AG04450 (cell line): ENCODE measurements at regions of chr16 and their contacts with region 1.

Region 1: GRCh38 chr16:88785106-88785924 is at the start of gene PIEZO1:
- DNase-seq: no peak
- H3K4me3 ChIP-seq: peak within 1 kb of the TSS; percentile 75
- H3K27ac ChIP-seq: peak within 1 kb of the TSS; percentile 77
- H3K27me3 ChIP-seq: no peaks in the 10 kb centered on the region
- CTCF ChIP-seq: peak; percentile 82
- polyA plus RNA-seq, gene PIEZO1: 47.0 and 72.7 TPM in 2 replicates

Region 2: GRCh38 chr16:88479793-88480760 is 305.2 kb before region 1 on chr16:
- CTCF ChIA-PET with region 1: no interaction called
- POLR2A ChIA-PET with region 1: no interaction called
- DNase-seq: no peak
- H3K4me3 ChIP-seq: no peak overlapping the region
- H3K27ac ChIP-seq: no peak overlapping the region
- H3K27me3 ChIP-seq: no peaks in the 10 kb centered on the region
- CTCF ChIP-seq: no peak

Region 3: DNA sequence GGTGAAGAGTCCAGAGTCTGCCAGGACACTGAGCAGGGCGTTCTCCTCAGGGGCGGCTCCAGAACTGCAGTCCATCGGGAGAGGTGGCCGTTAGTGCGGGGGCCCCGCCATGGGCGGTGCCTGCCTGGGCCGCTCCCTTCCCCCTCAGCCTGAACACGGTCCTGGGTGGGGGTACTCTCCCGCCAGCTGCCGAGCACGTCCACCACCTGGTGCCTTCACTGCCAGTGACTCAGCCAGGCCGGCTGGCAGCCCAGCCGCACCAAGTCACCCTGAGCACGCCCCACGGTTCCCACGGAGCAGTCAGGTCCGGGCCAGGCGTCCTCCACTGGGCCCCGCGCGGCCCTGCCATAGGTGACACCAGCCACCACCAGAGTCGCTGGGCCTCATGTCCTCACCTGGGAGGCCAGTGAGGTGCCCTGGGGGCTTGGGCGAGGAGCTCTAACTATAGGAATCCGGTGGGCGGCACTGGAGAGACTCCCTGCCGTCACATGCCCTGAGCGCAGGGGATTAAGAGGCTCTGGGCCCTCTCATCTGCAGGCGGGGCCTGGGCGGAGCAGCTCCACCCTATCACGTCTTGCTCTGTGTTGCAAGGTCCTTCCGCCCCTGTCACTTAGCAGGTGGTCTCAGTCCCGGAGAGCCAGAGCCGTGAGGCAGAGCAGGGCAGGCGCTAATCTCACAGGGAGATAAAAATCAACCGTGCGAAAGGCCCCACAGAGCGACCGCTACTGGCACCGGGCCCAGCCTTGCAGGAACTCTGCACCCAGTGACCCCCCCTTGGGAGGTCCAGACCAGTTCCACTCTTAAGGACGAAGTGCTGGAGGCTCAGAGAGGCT is 14.6 kb before region 1 on chr16:
- CTCF ChIA-PET with region 1: interaction called, 5 read pairs
- POLR2A ChIA-PET with region 1: interaction called, 35 read pairs
- DNase-seq: peak; percentile 63
- H3K4me3 ChIP-seq: peak overlapping the region; percentile 25
- H3K27ac ChIP-seq: peak overlapping the region; percentile 83
- H3K27me3 ChIP-seq: no peaks in the 10 kb centered on the region
- CTCF ChIP-seq: no peak

Region 4: GRCh38 chr16:89093602-89094251 is 308.4 kb after region 1 on chr16 and contains the start of gene ACSF3:
- CTCF ChIA-PET with region 1: no interaction called
- POLR2A ChIA-PET with region 1: no interaction called
- DNase-seq: no peak
- H3K4me3 ChIP-seq: peak within 1 kb of the TSS; percentile 79
- H3K27ac ChIP-seq: no peak within 1 kb of the TSS
- H3K27me3 ChIP-seq: peaks cover 29% of the 10 kb centered on the region
- CTCF ChIP-seq: no peak
- polyA plus RNA-seq, gene ACSF3: 11.0 and 11.2 TPM in 2 replicates